ENCODE measurements at regions of chr16 and their contacts with region 1.

Region 1: DNA sequence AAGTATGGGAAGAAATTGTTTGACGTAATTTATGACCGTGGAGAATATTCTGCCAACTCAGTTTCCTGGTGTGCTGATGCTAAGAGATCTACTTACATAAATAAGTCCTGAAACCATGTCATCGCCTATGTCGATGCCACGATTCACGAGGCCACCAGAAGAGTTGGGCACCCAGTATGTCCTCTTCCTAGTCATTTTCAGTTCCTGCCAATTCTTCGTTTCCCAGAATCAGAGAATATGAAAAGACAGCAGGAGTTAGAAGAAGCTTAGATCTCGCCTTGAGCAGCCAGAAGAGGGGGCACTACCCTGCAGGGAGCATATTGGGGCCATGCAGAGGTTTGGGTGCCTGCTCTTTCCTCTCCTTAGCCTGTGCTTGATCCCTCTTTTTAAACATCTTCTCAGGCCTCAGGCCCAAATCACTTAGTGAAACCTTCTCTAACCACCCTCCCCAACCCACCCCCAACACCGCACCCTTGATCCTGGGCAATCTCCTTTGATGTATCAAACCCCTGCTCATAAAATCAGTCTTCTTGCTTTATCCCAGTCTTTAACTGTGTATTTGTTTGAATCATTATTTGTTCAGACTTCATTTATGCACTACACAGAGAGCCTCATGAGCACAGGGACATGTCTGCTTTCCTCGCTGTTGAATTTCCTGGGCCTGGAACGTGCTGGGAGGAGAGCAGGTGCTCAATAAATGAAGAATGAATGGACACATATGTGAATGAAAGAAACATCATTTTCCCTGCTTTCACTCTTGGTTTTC is 12.2 kb upstream of the LONP2 start:
- DNase-seq: no peak
- ATAC-seq: no peak
- H3K4me3 ChIP-seq: no peak overlapping the region
- H3K27ac ChIP-seq: no peak overlapping the region
- H3K4me1 ChIP-seq: no peaks in the 10 kb centered on the region
- H3K27me3 ChIP-seq: no peaks in the 10 kb centered on the region
- CTCF ChIP-seq: no peak
- POLR2A ChIP-seq: no peak

Region 2: DNA sequence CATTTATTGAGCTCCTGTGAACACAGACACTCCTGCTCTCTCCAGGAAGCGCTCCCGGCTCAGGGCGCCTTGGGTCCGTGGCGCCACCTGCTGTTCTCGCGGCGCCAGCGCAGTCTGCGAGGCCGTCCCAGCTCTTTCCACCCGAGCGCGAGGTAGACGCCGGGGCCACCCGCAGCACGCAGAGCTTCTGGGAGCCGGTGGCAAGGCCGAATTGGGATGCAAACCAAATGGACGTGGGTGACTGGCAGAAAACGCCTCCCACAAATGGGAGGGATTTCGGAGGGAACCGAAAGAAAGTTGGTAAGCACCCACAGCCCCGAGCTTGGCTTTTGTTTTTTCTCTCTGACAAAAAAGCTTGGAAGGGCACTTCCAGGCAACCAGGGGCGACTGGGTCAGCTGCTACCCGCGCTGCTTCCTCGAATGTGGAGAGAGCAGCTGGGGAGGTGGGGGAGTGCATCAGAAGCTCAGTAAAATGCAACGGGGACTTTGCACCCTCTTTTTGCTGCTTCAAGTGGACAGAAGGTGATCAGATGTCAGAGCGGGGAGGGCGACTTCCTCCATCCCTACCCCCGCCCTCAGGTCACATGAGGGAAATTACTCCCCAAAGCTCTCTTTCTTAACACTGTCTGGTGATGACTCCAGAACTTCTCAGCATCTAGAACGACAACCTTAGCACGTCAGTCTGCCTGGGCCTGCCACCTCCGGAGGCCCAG is 391.6 kb after region 1 on chr16:
- in situ Hi-C with region 1: loop called in 1 of 4 experiments (anchors 10 kb)
- intact Hi-C with region 1: no loop called
- DNase-seq: peak; percentile 60 to 66
- ATAC-seq: peak; percentile 95
- H3K4me3 ChIP-seq: peak overlapping the region; percentile 57 to 64 (median 60)
- H3K27ac ChIP-seq: peak overlapping the region; percentile 63 to 76 (median 66)
- H3K4me1 ChIP-seq: peaks cover 4 to 15% of the 10 kb centered on the region in 2 donors
- H3K27me3 ChIP-seq: no peaks in the 10 kb centered on the region
- CTCF ChIP-seq: peak; percentile 93 to 99 (median 96)
- POLR2A ChIP-seq: peak in 1 of 2 donors; percentile 14

Measured in gastrocnemius medialis (tissue), 4 donors.